HCT116 (cell line): ENCODE measurements at regions of chr12 and their contacts with region 1.

Region 1: DNA sequence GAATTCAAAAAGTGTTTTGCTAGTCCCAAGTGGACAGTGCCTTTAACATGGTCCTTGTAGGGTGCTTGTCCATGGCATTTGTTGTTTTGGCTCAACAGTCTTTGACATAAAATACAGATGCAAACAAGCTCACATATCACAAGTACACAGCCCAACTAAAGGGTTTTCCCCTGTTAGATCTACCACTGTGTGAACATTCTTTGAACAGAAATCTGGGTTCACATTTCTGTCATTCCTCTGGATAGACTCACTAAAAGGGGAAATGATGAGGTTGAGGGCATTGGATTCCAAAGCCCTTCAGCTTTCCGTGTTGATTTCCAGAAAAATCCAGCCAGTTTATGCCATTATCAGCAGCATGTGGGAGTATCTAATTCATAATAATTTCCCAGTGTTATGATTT is 54.1 kb downstream of the EP400 start:
- DNase-seq: no peak
- ATAC-seq: no peak
- H3K4me3 ChIP-seq: no peak overlapping the region
- H3K27ac ChIP-seq: no peak overlapping the region
- H3K4me1 ChIP-seq: no peaks in the 10 kb centered on the region
- H3K27me3 ChIP-seq: no peaks in the 10 kb centered on the region
- CTCF ChIP-seq: no peak
- POLR2A ChIP-seq: no peak
- RAD21 ChIP-seq: no peak

Region 2: DNA sequence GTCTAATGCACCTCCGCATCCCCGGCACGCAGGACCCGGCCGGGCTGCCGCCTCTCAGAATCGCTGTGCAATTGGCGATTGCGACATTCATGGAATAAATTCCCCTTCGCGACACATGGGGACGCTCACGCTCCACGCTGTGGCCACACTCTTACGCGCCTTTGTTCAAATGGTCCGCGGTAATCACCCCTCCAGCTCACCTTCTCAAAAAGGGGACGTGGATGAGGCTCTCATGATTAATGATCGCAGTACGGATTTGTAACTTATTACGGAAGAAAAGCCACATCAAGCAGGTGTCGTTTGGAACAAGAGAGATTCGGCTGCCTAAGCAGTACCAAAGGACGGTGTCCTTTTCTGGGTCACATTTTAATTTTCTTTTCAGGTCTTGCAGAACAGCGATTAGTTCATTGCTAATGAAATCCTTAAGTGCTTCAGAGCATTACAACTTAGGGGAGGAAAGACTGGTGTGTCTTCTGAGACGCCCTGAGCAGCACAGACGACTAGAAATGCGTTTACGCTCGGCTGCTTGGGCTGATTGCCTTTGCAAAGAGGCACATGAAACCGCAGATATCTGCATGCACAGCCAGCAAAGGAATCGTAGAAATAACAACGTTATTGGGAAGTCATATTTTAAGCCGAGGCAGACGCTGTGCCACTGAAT is 1087.5 kb before region 1 on chr12:
- CTCF ChIA-PET with region 1: no interaction called
- POLR2A ChIA-PET with region 1: no interaction called
- RAD21 ChIA-PET with region 1: no interaction called
- intact Hi-C with region 1: loop called (anchors 1 kb)
- DNase-seq: peak; percentile 38
- ATAC-seq: peak; percentile 94
- H3K4me3 ChIP-seq: peak overlapping the region in 1 of 2 experiments; percentile 11; a peak in 2 of 4 replicates
- H3K27ac ChIP-seq: no peak overlapping the region
- H3K4me1 ChIP-seq: peaks cover 2 to 6% of the 10 kb centered on the region in 2 experiments; a peak in 1 of 4 replicates
- H3K27me3 ChIP-seq: peaks cover 10% of the 10 kb centered on the region; the same call in 1 of the 2 replicates
- CTCF ChIP-seq: peak; percentile 78 to 92 (median 87)
- POLR2A ChIP-seq: no peak
- RAD21 ChIP-seq: peak; percentile 97

Region 3: DNA sequence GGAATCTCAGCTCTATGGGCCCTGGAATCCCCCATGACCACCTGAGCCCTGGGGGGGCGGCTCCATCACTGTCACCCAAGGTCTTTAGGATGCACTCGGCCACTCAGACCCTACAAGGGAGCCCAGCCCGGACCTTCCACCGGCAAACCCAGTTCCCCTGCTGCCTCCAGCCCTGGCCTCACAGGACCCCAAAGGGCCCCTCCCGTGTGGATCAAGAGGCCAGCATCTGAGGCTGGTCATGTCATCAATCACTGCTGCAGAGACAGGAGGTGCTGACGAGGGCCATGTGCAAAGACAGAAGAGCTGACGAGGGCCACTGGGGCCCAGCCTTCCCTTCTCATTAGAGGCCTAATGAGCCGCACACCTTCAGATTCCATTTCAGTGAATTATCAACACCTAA is 332.0 kb before region 1 on chr12:
- CTCF ChIA-PET with region 1: no interaction called
- POLR2A ChIA-PET with region 1: no interaction called
- RAD21 ChIA-PET with region 1: no interaction called
- intact Hi-C with region 1: no loop called
- DNase-seq: no peak
- ATAC-seq: no peak
- H3K4me3 ChIP-seq: no peak overlapping the region
- H3K27ac ChIP-seq: no peak overlapping the region
- H3K4me1 ChIP-seq: peaks cover 0 to 10% of the 10 kb centered on the region in 2 experiments; a peak in 2 of 4 replicates
- H3K27me3 ChIP-seq: peaks cover 16% of the 10 kb centered on the region
- CTCF ChIP-seq: no peak
- POLR2A ChIP-seq: no peak
- RAD21 ChIP-seq: no peak

Region 4: DNA sequence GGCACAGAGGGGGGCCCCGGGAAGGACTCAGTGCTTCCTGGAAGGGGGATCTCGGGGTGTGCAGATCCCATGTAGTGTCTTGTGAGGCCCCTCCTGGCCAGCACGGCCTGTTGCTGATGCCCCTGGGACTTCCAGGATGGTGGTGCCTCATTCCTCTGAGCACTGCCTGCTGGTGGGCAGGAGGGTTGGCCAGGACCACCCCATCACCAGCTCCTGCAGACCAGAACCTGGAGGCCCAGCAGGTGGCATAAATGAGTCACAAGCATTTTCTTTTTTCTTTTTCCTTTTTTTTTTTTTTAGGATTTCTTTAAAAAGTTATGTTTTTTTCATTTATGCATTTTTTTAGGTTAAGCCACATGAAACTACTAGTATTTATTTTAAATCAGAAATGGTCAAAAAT is 167.7 kb before region 1 on chr12:
- CTCF ChIA-PET with region 1: no interaction called
- POLR2A ChIA-PET with region 1: no interaction called
- RAD21 ChIA-PET with region 1: interaction called in 1 of 2 experiments, 3 read pairs
- intact Hi-C with region 1: loop called (anchors 1 kb)
- DNase-seq: no peak
- ATAC-seq: no peak
- H3K4me3 ChIP-seq: no peak overlapping the region
- H3K27ac ChIP-seq: no peak overlapping the region
- H3K4me1 ChIP-seq: peaks cover 0 to 6% of the 10 kb centered on the region in 2 experiments; a peak in 1 of 4 replicates
- H3K27me3 ChIP-seq: no peaks in the 10 kb centered on the region
- CTCF ChIP-seq: peak; percentile 31 to 51 (median 43); a peak in 4 of 6 replicates
- POLR2A ChIP-seq: no peak
- RAD21 ChIP-seq: peak; percentile 65

Region 5: DNA sequence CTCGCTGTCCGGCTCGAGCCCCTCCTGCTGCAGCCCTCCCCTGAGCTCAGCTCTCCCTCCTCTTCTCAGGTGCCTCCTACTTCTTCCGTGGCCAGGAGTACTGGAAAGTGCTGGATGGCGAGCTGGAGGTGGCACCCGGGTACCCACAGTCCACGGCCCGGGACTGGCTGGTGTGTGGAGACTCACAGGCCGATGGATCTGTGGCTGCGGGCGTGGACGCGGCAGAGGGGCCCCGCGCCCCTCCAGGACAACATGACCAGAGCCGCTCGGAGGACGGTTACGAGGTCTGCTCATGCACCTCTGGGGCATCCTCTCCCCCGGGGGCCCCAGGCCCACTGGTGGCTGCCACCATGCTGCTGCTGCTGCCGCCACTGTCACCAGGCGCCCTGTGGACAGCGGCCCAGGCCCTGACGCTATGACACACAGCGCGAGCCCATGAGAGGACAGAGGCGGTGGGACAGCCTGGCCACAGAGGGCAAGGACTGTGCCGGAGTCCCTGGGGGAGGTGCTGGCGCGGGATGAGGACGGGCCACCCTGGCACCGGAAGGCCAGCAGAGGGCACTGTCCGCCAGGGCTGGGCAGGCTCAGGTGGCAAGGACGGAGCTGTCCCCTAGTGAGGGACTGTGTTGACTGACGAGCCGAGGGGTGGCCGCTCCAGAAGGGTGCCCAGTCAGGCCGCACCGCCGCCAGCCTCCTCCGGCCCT is 152.8 kb before region 1 on chr12:
- CTCF ChIA-PET with region 1: no interaction called
- POLR2A ChIA-PET with region 1: no interaction called
- RAD21 ChIA-PET with region 1: no interaction called
- intact Hi-C with region 1: loop called (anchors 1 kb)
- DNase-seq: no peak
- ATAC-seq: peak; percentile 89
- H3K4me3 ChIP-seq: no peak overlapping the region
- H3K27ac ChIP-seq: no peak overlapping the region
- H3K4me1 ChIP-seq: no peaks in the 10 kb centered on the region
- H3K27me3 ChIP-seq: no peaks in the 10 kb centered on the region
- CTCF ChIP-seq: peak; percentile 53 to 64 (median 63)
- POLR2A ChIP-seq: no peak
- RAD21 ChIP-seq: peak; percentile 92